ENCODE measurements at regions of chr20 and their contacts with region 1.

Region 1: DNA sequence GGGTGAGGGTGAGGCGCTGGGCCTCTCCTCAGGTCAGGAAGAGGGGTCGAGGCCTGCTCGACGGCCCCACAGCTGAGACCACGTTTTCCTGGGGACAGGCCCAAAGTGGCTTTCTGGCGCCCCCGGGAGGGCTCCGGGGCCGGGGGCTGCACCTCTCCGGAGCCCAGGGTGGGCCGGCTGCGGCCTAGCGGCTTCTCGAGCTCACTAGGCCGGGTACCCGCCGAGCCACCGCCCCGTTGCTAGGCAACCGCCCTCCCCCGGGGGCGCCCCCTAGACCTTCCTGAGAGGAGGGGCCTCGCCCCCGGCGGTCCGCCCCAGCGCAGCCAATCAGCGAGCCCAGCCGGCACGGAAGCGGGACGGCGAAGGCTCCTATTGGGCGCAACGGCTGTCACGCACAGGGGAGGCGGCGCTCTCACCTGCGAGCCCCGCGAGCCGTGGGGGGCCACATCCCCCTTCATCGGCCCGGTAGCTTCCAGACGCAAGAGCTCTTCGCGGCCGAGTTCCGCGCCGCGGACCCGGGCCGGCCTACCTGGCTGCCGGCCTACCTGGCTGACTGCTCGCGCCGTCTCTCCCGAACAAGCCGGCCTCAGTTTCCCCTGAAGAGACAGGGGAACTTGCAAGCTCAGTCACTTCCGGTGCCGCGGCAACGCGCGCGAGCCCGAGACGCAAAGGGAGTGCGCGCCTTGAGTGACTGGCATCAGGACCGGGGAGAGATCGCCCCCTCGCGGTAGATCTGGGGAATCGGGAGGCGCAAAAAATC is 831 bp upstream of the BCL2L1 start:
- DNase-seq: peak; percentile 98 to 99 (median 99)
- ATAC-seq: peak; percentile 94
- H3K4me3 ChIP-seq: peak overlapping the region; percentile 65 to 85
- H3K27ac ChIP-seq: peak overlapping the region; percentile 97 to 99
- H3K4me1 ChIP-seq: peaks cover 7 to 48% of the 10 kb centered on the region in 2 donors
- H3K27me3 ChIP-seq: no peaks in the 10 kb centered on the region
- CTCF ChIP-seq: peak; percentile 87 to 88

Region 2: DNA sequence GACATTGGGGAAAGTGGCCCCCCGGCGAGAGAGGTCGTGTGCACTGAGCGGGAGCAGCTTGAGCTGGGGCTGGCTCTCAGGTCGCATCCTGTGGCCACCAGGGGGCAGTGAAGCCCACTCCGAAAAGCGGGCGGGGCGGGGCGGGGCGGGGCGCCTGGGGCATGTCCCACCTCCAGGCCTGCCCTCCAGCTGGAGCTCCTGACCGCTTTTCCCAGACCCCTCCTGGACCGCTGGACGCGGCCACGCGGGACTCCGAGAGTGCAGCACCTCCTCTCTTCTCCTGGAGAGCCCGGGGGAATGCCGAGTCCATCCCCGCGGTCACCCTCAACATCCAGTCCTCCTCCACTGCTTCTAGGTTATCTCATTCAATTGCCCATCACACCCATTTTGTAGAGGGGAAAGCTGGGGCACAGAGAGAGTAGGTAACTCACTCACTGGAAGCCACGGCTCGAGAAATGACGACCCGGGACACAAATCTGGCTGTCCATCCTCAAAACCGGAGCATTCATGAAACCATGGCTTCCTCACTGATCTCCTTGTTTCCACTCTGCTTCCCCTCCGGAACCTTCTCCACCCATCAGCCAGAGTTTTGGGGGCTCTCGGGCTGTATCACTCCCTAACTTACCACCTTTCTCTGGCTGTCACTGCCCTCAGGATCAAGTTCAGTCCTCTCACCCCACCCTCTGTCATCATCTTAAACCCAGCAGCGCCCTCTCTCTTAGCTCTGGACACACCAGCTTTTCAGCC is 61.7 kb before region 1 on chr20:
- intact Hi-C with region 1: loop called (anchors 5 to 10 kb)
- DNase-seq: peak; percentile 75 to 93 (median 85)
- ATAC-seq: peak; percentile 85
- H3K4me3 ChIP-seq: peak overlapping the region; percentile 14 to 30
- H3K27ac ChIP-seq: peak overlapping the region; percentile 64 to 69
- H3K4me1 ChIP-seq: peaks cover 27 to 54% of the 10 kb centered on the region in 2 donors
- H3K27me3 ChIP-seq: no peaks in the 10 kb centered on the region
- CTCF ChIP-seq: peak; percentile 73 to 93